Activated CD4-positive, alpha-beta T cell treated with anti-CD3 and anti-CD28 coated beads for 36 hours (primary cell): ENCODE measurements at regions of chr6 and their contacts with region 1.

Region 1: DNA sequence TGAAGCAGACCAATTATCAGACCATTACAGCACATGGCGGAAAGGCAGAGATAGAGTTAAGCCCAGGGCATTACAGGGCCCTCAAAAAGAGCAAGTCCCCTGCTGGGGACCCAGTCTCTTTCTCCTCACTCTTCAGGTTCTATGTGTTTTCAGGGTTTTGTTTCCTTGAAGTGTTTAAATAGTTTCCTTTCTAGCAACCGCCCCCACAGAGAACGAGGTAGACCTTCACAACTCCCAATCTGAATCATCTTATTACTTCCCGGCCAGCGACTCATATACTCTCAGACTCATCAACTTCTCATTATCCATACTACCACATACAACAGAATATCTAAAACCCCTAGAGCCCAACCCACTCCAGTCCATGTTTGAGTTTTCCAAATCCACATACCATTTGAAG is 526.6 kb upstream of the ARID1B start:
- DNase-seq: peak; percentile 74
- ATAC-seq: peak; percentile 97
- H3K4me3 Mint-ChIP-seq: no peak overlapping the region
- H3K27ac Mint-ChIP-seq: peak overlapping the region; percentile 97
- H3K4me1 Mint-ChIP-seq: peaks cover 29% of the 10 kb centered on the region
- H3K27me3 Mint-ChIP-seq: peaks cover 4% of the 10 kb centered on the region

Region 2: DNA sequence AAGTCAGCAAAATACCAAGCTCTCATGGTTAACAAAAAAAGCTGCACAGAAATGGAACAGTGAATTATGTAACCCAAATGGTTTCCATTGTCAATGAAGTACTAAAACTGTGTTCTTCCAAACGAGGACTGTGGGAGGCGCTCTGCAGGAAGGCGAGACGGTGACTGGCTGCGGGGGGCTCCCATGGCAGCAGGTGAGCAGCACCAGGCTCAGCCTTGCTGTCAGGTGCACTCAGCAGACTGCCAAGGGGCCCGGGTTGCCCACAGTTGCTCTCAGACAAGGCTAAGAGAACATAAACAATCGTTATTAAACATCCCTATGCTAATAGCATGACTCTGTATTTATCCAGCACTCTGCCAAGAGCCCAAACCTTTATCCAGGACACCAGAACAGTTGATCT is 103.7 kb before region 1 on chr6:
- CTCF ChIA-PET with region 1: no interaction called
- POLR2A ChIA-PET with region 1: no interaction called
- intact Hi-C with region 1: no loop called
- DNase-seq: no peak
- ATAC-seq: no peak
- H3K4me3 Mint-ChIP-seq: no peak overlapping the region
- H3K27ac Mint-ChIP-seq: no peak overlapping the region
- H3K4me1 Mint-ChIP-seq: peaks cover 3% of the 10 kb centered on the region
- H3K27me3 Mint-ChIP-seq: no peaks in the 10 kb centered on the region

Region 3: DNA sequence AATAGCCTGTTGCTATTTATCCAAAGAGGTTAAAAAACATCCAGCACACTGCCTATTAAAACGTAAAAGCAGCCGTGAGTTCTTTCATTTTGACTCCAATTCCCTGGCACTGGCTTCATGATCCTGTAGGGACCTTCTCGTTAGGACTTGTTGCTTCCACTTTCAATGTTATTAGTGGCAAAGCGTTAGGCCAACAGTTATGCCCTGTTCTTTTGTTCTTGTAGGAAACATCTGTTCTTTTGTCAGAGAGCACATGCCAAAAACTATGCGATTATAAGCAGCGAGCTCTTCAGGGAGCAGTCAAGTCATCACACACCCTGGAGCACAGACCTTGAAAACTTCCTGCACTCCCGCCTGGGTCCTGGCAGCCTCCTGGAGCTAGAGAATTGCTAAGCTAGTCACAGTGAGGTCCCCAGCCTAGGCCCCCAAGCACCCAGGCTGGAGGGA is 82.9 kb before region 1 on chr6:
- CTCF ChIA-PET with region 1: no interaction called
- POLR2A ChIA-PET with region 1: no interaction called
- intact Hi-C with region 1: loop called in 1 of 2 experiments (anchors 5 kb)
- DNase-seq: no peak
- ATAC-seq: peak; percentile 47
- H3K4me3 Mint-ChIP-seq: peak overlapping the region; percentile 60
- H3K27ac Mint-ChIP-seq: peak overlapping the region; percentile 88
- H3K4me1 Mint-ChIP-seq: peaks cover 57% of the 10 kb centered on the region
- H3K27me3 Mint-ChIP-seq: no peaks in the 10 kb centered on the region

Region 4: GRCh38 chr6:156174031-156174890 is 76.3 kb before region 1 on chr6:
- CTCF ChIA-PET with region 1: no interaction called
- POLR2A ChIA-PET with region 1: no interaction called
- intact Hi-C with region 1: loop called (anchors 1 to 5 kb)
- DNase-seq: peak; percentile 73
- ATAC-seq: peak; percentile 95
- H3K4me3 Mint-ChIP-seq: peak overlapping the region; percentile 9
- H3K27ac Mint-ChIP-seq: peak overlapping the region; percentile 88
- H3K4me1 Mint-ChIP-seq: peaks cover 27% of the 10 kb centered on the region
- H3K27me3 Mint-ChIP-seq: no peaks in the 10 kb centered on the region

Region 5: DNA sequence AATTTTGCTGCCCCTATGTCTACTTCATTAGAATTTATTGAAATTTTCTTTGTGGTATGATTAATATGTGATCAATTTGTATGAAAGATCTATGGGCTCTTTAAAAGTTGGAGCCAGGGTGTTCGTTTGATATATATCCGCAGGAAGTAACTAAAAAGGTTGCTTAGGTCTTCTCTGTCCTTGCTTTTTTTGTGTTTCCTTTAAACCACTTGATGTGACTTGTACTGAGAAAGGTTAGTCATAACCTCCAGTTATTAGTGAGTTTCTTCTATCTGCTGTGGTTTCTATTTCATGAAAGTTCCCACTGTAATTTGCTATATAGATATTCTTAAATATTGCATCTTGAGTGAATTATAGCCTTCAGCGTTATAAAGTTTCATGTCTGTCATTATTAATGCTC is 58.7 kb before region 1 on chr6:
- CTCF ChIA-PET with region 1: no interaction called
- POLR2A ChIA-PET with region 1: no interaction called
- intact Hi-C with region 1: loop called (anchors 2 to 10 kb)
- DNase-seq: no peak
- ATAC-seq: peak; percentile 87
- H3K4me3 Mint-ChIP-seq: peak overlapping the region; percentile 26
- H3K27ac Mint-ChIP-seq: peak overlapping the region; percentile 74
- H3K4me1 Mint-ChIP-seq: peaks cover 42% of the 10 kb centered on the region
- H3K27me3 Mint-ChIP-seq: no peaks in the 10 kb centered on the region

Region 6: GRCh38 chr6:156279261-156279969 is 28.8 kb after region 1 on chr6:
- CTCF ChIA-PET with region 1: no interaction called
- POLR2A ChIA-PET with region 1: no interaction called
- intact Hi-C with region 1: no loop called
- DNase-seq: no peak
- ATAC-seq: no peak
- H3K4me3 Mint-ChIP-seq: no peak overlapping the region
- H3K27ac Mint-ChIP-seq: no peak overlapping the region
- H3K4me1 Mint-ChIP-seq: peaks cover 9% of the 10 kb centered on the region
- H3K27me3 Mint-ChIP-seq: peaks cover 9% of the 10 kb centered on the region

Region 7: GRCh38 chr6:156396068-156396771 is 145.6 kb after region 1 on chr6:
- CTCF ChIA-PET with region 1: no interaction called
- POLR2A ChIA-PET with region 1: no interaction called
- intact Hi-C with region 1: loop called in 1 of 2 experiments (anchors 1 kb)
- DNase-seq: peak; percentile 46
- ATAC-seq: peak; percentile 66
- H3K4me3 Mint-ChIP-seq: peak overlapping the region; percentile 45
- H3K27ac Mint-ChIP-seq: peak overlapping the region; percentile 72
- H3K4me1 Mint-ChIP-seq: peaks cover 77% of the 10 kb centered on the region
- H3K27me3 Mint-ChIP-seq: peaks cover 4% of the 10 kb centered on the region

Region 8: GRCh38 chr6:156852132-156852857 is 601.7 kb after region 1 on chr6:
- CTCF ChIA-PET with region 1: no interaction called
- POLR2A ChIA-PET with region 1: no interaction called
- intact Hi-C with region 1: loop called in 1 of 2 experiments (anchors 10 kb)
- DNase-seq: no peak
- ATAC-seq: peak; percentile 26
- H3K4me3 Mint-ChIP-seq: no peak overlapping the region
- H3K27ac Mint-ChIP-seq: peak overlapping the region; percentile 51
- H3K4me1 Mint-ChIP-seq: peaks cover 89% of the 10 kb centered on the region
- H3K27me3 Mint-ChIP-seq: no peaks in the 10 kb centered on the region